IMR-90 (cell line): ENCODE measurements at regions of chr7 and their contacts with region 1.

Region 1: GRCh38 chr7:87234949-87235348 is 15.4 kb upstream of the TMEM243 start:
- DNase-seq: peak; percentile 60
- ATAC-seq: peak; percentile 90
- H3K4me3 ChIP-seq: no peak overlapping the region
- H3K27ac ChIP-seq: no peak overlapping the region
- H3K4me1 ChIP-seq: peaks cover 6% of the 10 kb centered on the region
- H3K27me3 ChIP-seq: peaks cover 13% of the 10 kb centered on the region
- CTCF ChIP-seq: no peak
- POLR2A ChIP-seq: no peak
- RAD21 ChIP-seq: no peak

Region 2: DNA sequence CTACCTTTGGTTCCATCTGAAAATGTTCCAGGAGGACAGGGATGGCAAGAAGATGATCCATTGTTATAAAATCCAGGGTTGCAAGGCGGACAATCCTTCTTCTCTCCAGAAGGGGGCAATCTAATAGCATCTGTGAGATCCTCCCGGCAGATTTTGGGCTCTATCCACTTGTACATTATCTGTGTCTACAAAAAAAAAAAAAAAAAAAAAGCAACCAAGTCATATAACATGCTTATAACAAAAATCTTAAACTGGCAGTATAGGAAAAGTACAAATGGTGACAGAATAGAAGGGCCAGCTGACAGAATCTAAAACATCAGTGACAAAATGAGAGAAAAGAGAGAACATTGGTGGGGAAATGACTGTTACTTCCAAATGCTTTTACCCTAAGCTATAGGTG is 308.2 kb before region 1 on chr7:
- CTCF ChIA-PET with region 1: interaction called, 6 read pairs
- POLR2A ChIA-PET with region 1: no interaction called
- dilution Hi-C with region 1: no loop called
- in situ Hi-C with region 1: no loop called
- intact Hi-C with region 1: loop called (anchors 1 kb)
- DNase-seq: peak; percentile 41
- ATAC-seq: peak; percentile 69; the same call in 1 of the 2 replicates
- H3K4me3 ChIP-seq: no peak overlapping the region
- H3K27ac ChIP-seq: no peak overlapping the region
- H3K4me1 ChIP-seq: no peaks in the 10 kb centered on the region
- H3K27me3 ChIP-seq: no peaks in the 10 kb centered on the region
- CTCF ChIP-seq: peak; percentile 62
- POLR2A ChIP-seq: no peak
- RAD21 ChIP-seq: peak; percentile 59

Region 3: GRCh38 chr7:86939197-86939814 is 295.6 kb before region 1 on chr7:
- CTCF ChIA-PET with region 1: no interaction called
- POLR2A ChIA-PET with region 1: no interaction called
- dilution Hi-C with region 1: no loop called
- in situ Hi-C with region 1: loop called (anchors 5 kb)
- intact Hi-C with region 1: loop called (anchors 1 kb)
- DNase-seq: peak; percentile 60
- ATAC-seq: peak; percentile 85
- H3K4me3 ChIP-seq: no peak overlapping the region
- H3K27ac ChIP-seq: no peak overlapping the region
- H3K4me1 ChIP-seq: no peaks in the 10 kb centered on the region
- H3K27me3 ChIP-seq: no peaks in the 10 kb centered on the region
- CTCF ChIP-seq: peak; percentile 62
- POLR2A ChIP-seq: no peak
- RAD21 ChIP-seq: peak; percentile 50

Region 4: DNA sequence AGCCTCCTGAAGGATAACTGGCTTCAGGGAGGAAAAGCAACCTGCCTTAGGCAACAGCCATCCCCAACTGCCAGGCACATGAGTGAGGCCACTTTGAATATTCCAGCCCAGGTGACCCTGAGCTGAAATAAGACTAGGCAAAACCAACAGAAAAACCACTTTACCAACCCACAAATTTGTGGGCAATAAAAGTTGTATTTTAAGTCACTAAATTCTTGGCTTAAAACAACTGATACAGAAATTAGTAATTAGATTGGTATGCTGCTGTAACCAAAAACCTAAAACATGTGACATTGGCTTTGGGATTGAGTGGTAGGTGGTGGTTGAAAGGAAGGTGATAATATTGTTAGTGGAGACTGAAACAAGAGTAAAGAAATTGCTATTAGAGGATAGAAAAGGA is 200.6 kb after region 1 on chr7:
- CTCF ChIA-PET with region 1: no interaction called
- POLR2A ChIA-PET with region 1: no interaction called
- dilution Hi-C with region 1: no loop called
- in situ Hi-C with region 1: no loop called
- intact Hi-C with region 1: no loop called
- DNase-seq: peak; percentile 13
- ATAC-seq: no peak
- H3K4me3 ChIP-seq: no peak overlapping the region
- H3K27ac ChIP-seq: no peak overlapping the region
- H3K4me1 ChIP-seq: peaks cover 2% of the 10 kb centered on the region
- H3K27me3 ChIP-seq: peaks cover 6% of the 10 kb centered on the region
- CTCF ChIP-seq: no peak
- POLR2A ChIP-seq: no peak
- RAD21 ChIP-seq: no peak